Dendritic cell treated with granulocyte-macrophage colony-stimulating factor and Interleukin-4, amounts not matched to agents 40 ng/mL and 50 ng/mL, for 4 days (primary cell): ENCODE measurements at regions of chr3 and their contacts with region 1.

Region 1: DNA sequence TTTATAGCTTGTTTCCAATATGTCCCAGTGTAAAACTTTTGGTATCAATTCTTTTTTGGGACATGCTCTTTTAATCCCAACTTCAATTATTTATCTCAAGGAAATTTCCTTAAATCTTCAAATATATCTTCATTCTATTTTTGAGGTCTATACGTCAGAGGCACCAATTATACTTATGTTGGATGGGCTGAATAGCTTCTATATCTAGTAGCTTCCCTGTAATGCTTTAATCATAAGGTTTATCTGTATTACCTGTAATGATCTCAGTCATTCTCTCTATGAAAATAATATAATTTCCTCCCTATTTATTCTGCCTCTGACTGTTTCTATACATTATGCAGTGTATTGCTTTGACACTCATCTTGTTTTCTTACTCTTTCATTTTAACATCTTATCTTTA is 29.9 kb upstream of the MCCC1 start:
- H3K4me3 Mint-ChIP-seq: no peak overlapping the region
- H3K27ac Mint-ChIP-seq: peak overlapping the region; percentile 59
- H3K4me1 Mint-ChIP-seq: peaks cover 24% of the 10 kb centered on the region
- H3K27me3 Mint-ChIP-seq: peaks cover 22% of the 10 kb centered on the region

Region 2: DNA sequence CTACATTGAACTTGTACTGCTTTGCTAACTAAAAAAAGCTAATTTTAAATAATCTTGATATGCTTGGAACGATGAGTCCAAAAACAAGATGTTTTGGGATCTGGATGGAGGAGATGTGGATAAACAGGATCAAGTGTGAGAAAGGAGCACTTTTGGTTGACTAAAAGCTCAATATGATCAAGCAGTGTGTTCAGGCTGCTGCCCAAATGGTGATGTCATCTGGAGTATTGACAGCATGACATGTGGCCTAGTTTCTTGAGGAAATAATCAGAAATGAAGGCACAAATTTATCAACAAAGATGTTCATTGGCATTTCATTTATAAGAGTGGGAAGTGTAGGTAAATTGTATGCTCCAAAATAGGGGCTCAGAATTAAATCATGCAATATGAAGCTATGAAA is 1256.4 kb before region 1 on chr3:
- intact Hi-C with region 1: no loop called
- H3K4me3 Mint-ChIP-seq: no peak overlapping the region
- H3K27ac Mint-ChIP-seq: no peak overlapping the region
- H3K4me1 Mint-ChIP-seq: no peaks in the 10 kb centered on the region
- H3K27me3 Mint-ChIP-seq: no peaks in the 10 kb centered on the region

Region 3: DNA sequence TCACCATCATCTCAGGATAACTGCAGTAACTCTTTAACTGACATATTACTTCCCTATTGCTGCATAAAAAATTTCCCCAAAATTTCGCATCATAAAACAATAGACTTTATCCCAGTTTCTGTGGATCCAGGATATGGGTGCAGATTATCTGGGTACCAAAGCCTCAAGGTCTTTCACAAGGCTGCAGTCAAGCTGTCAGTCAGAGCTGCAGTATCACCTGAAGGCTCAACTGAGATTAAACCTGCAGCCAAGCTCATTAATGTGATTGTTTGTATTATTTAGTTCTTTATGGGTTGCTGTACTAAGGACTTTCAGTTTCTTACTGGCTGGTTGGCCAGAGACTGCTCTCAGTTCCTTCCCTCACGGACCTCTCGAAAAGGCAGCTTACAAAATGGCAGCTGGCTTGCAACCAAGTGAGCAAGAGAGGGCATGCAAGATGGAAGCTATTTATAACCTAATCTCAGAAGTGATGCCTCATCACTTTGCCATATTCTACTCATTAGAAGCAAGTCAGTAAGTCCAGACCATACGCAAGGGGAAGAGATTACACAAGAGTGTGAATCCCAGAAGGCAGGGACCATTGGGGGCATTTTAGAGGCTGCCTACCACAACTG is 203.8 kb before region 1 on chr3:
- intact Hi-C with region 1: no loop called
- H3K4me3 Mint-ChIP-seq: no peak overlapping the region
- H3K27ac Mint-ChIP-seq: peak overlapping the region; percentile 45
- H3K4me1 Mint-ChIP-seq: peaks cover 17% of the 10 kb centered on the region
- H3K27me3 Mint-ChIP-seq: no peaks in the 10 kb centered on the region

Region 4: GRCh38 chr3:183161552-183162336 is 32.5 kb after region 1 on chr3:
- intact Hi-C with region 1: loop called (anchors 5 kb)
- H3K4me3 Mint-ChIP-seq: peak overlapping the region; percentile 77
- H3K27ac Mint-ChIP-seq: peak overlapping the region; percentile 65
- H3K4me1 Mint-ChIP-seq: peaks cover 40% of the 10 kb centered on the region
- H3K27me3 Mint-ChIP-seq: peaks cover 55% of the 10 kb centered on the region